SK-N-SH (cell line): ENCODE measurements at regions of chr17 and their contacts with region 1.

Region 1: DNA sequence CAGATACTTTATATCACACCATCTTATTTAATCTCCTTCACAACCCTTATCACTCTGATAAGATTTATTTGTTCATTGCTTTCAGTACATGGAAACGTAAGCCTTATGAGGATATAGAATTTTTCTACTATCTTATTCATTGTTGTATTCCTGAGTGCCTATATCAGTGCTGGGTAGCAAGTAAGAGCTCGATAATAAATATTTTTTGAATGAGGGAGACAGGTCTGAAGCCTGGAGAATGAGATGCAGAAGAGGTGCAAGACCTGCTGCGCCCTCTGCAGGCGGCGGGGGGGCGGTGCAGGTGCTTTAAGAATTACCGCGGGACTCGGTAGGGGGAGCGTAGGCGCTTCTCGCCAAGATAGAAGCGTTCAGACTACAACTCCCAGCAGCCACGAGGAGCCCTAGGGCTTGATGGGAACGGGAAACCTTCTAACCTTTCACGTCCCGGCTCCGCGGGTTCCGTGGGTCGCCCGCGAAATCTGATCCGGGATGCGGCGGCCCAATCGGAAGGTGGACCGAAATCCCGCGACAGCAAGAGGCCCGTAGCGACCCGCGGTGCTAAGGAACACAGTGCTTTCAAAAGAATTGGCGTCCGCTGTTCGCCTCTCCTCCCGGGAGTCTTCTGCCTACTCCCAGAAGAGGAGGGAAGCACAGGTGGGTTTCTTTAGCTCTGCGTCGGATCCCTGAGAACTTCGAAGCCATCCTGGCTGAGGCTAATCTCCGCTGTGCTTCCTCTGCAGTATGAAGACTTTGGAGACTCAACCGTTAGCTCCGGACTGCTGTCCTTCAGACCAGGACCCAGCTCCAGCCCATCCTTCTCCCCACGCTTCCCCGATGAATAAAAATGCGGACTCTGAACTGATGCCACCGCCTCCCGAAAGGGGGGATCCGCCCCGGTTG is at the start of gene WRAP53:
- DNase-seq: peak; percentile 90
- H3K4me3 ChIP-seq: peak within 1 kb of the TSS; percentile 80 to 91
- H3K27ac ChIP-seq: peak within 1 kb of the TSS; percentile 97 to 98
- H3K4me1 ChIP-seq: peaks cover 12 to 17% of the 10 kb centered on the region in 2 experiments; a peak in 3 of 4 replicates
- H3K27me3 ChIP-seq: no peaks in the 10 kb centered on the region
- CTCF ChIP-seq: peak; percentile 99
- EP300 ChIP-seq: 0 out of 4 replicates have a peak, but pooled peaks of 1 of the 2 experiments have one; percentile 11
- RAD21 ChIP-seq: peak; percentile 79
- polyA plus RNA-seq, gene WRAP53: 6.6 and 8.6 TPM in 2 replicates

Region 2: DNA sequence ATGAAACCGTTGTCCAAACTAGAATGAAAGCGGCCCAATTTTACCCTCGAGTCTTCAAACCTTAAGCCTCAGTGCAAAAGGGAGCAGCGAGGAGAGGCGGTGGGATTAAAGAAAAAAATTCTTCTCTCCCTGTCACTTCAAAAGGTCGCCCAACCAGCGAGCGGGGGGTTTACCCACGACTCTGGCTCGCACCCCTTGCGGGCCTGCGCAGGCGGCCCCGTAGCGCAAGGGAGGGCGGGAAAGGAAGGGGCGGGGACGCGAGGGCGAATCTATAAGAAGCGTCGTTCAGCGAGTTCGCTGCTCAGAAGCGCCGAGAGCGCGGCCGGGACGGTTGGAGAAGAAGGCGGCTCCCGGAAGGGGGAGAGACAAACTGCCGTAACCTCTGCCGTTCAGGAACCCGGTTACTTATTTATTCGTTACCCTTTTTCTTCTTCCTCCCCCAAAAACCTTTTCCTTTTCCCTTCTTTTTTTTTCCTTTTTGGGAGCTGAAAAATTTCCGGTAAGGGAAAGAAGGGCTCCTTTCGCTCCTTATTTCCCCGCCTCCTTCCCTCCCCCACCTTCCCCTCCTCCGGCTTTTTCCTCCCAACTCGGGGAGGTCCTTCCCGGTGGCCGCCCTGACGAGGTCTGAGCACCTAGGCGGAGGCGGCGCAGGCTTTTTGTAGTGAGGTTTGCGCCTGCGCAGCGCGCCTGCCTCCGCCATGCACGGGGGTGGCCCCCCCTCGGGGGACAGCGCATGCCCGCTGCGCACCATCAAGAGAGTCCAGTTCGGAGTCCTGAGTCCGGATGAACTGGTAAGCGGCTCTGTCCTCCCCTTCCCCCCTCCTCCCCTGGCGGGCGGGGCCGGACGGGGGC is 203.9 kb before region 1 on chr17 and contains the start of gene POLR2A:
- CTCF ChIA-PET with region 1: no interaction called
- POLR2A ChIA-PET with region 1: interaction called, 13 read pairs
- DNase-seq: peak; percentile 98
- H3K4me3 ChIP-seq: peak within 1 kb of the TSS; percentile 85 to 100
- H3K27ac ChIP-seq: peak within 1 kb of the TSS; percentile 99
- H3K4me1 ChIP-seq: peaks cover 31 to 34% of the 10 kb centered on the region in 2 experiments
- H3K27me3 ChIP-seq: no peaks in the 10 kb centered on the region
- CTCF ChIP-seq: no peak
- EP300 ChIP-seq: peak in 1 of 2 experiments; percentile 2; a peak in 2 of 4 replicates
- RAD21 ChIP-seq: 0 out of 2 replicates have a peak, but pooled peaks have one; percentile 13
- polyA plus RNA-seq, gene POLR2A: 19.0 and 37.3 TPM in 2 replicates

Region 3: GRCh38 chr17:7589204-7589868 is 98.8 kb before region 1 on chr17:
- CTCF ChIA-PET with region 1: interaction called, 19 read pairs
- POLR2A ChIA-PET with region 1: interaction called, 37 read pairs
- DNase-seq: peak; percentile 91
- H3K4me3 ChIP-seq: peak overlapping the region in 1 of 2 experiments; percentile 3; a peak in 1 of 4 replicates
- H3K27ac ChIP-seq: peak overlapping the region in 1 of 2 experiments; percentile 21; a peak in 2 of 4 replicates
- H3K4me1 ChIP-seq: peaks cover 17 to 32% of the 10 kb centered on the region in 2 experiments
- H3K27me3 ChIP-seq: no peaks in the 10 kb centered on the region
- CTCF ChIP-seq: peak; percentile 83
- EP300 ChIP-seq: no peak
- RAD21 ChIP-seq: peak; percentile 61

Region 4: DNA sequence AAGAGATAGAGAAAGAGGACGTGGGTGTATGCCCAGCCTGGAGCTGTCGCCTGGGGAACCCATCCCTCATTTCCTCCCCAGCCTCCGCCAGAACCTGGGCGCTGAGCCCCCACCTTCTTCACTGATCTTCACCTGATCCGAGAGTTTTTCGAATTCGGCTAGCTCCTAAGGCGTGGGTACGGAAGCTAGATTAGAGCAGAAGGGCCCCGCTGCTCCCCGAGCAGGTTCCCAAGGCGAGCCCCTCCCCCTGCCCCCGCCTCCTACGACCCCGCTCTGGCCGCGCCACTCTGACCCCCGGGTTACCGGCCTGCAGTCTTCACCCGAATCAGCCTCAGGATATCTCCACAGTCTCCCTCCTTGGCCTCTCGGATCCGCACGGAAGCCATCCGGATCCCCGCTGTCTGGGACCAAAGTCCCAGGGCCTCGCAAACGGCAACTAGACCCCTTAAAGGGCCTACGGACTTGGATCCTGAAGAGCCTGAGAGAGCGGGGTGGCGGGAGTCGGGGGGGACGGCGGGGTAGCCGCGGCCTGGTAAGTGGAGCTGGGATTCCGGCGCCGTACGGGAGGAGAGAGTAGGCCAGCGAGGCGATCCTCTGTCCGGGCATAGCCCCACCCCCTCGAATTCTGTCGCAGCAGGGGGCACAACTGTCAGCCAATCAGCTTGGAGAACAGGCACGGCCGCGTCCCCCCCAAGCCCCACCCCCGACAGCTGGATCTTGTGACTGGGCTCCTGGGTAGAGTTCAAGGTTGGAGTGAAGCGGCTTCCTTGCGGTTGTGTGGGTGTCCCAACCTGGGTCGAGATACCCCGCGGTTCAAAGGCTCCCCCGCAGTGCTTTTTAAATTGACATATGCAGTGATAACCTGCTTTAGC is 60.7 kb before region 1 on chr17 and contains the start of gene SAT2:
- CTCF ChIA-PET with region 1: interaction called, 166 read pairs
- POLR2A ChIA-PET with region 1: interaction called, 37 read pairs
- DNase-seq: peak; percentile 97
- H3K4me3 ChIP-seq: peak within 1 kb of the TSS; percentile 62 to 77
- H3K27ac ChIP-seq: peak within 1 kb of the TSS; percentile 85 to 88
- H3K4me1 ChIP-seq: peaks cover 0 to 20% of the 10 kb centered on the region in 2 experiments; a peak in 1 of 4 replicates
- H3K27me3 ChIP-seq: no peaks in the 10 kb centered on the region
- CTCF ChIP-seq: no peak
- EP300 ChIP-seq: no peak
- RAD21 ChIP-seq: no peak
- polyA plus RNA-seq, gene SAT2: 42.8 and 43.1 TPM in 2 replicates

Region 5: DNA sequence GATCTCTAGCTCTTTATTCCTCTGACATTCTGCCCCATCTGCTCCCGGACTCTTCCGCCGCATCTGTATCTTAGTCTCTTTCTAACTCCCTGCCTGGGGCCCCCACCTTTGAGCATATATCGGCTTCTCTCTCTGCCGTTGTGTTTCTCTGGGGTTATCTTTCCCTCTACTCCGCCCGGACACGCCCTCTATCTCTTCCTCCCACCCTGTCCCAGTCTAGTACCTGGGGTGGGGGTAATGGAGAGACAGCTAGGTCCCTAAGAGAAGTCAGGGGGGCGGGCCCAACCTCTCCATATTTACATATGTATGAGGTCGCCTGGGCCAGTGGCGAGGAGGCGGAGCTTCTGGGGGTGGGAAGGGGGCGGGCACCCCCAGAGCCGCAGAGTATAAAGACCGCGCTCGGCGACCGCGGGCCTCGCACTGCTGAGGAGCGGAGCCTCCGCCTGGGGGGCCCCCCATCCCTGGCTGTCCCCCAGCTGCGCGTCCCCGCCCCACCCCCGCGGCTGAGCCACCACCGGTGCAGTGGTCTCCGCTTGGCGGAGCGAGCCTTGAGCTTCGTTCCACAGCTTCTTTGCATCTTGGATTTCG is 37.6 kb before region 1 on chr17 and contains the start of gene ATP1B2:
- CTCF ChIA-PET with region 1: interaction called, 26 read pairs
- POLR2A ChIA-PET with region 1: interaction called, 40 read pairs
- DNase-seq: peak; percentile 95
- H3K4me3 ChIP-seq: peak within 1 kb of the TSS; percentile 47 to 50
- H3K27ac ChIP-seq: no peak within 1 kb of the TSS
- H3K4me1 ChIP-seq: peaks cover 0 to 7% of the 10 kb centered on the region in 2 experiments; a peak in 1 of 4 replicates
- H3K27me3 ChIP-seq: peaks cover 25% of the 10 kb centered on the region
- CTCF ChIP-seq: no peak
- EP300 ChIP-seq: no peak
- RAD21 ChIP-seq: no peak
- polyA plus RNA-seq, gene ATP1B2: 0.05 and 0.08 TPM in 2 replicates

Region 6: GRCh38 chr17:7703584-7704479 is 15.7 kb after region 1 on chr17:
- CTCF ChIA-PET with region 1: interaction called, 43 read pairs
- POLR2A ChIA-PET with region 1: interaction called, 53 read pairs
- DNase-seq: peak; percentile 86
- H3K4me3 ChIP-seq: peak overlapping the region; percentile 75 to 80
- H3K27ac ChIP-seq: peak overlapping the region; percentile 47 to 86; a peak in 3 of 4 replicates
- H3K4me1 ChIP-seq: peaks cover 9 to 35% of the 10 kb centered on the region in 2 experiments
- H3K27me3 ChIP-seq: no peaks in the 10 kb centered on the region
- CTCF ChIP-seq: no peak
- EP300 ChIP-seq: 0 out of 4 replicates have a peak, but pooled peaks of 1 of the 2 experiments have one; percentile 26
- RAD21 ChIP-seq: no peak